ENCODE measurements at regions of chr2 and their contacts with region 1.

Region 1: DNA sequence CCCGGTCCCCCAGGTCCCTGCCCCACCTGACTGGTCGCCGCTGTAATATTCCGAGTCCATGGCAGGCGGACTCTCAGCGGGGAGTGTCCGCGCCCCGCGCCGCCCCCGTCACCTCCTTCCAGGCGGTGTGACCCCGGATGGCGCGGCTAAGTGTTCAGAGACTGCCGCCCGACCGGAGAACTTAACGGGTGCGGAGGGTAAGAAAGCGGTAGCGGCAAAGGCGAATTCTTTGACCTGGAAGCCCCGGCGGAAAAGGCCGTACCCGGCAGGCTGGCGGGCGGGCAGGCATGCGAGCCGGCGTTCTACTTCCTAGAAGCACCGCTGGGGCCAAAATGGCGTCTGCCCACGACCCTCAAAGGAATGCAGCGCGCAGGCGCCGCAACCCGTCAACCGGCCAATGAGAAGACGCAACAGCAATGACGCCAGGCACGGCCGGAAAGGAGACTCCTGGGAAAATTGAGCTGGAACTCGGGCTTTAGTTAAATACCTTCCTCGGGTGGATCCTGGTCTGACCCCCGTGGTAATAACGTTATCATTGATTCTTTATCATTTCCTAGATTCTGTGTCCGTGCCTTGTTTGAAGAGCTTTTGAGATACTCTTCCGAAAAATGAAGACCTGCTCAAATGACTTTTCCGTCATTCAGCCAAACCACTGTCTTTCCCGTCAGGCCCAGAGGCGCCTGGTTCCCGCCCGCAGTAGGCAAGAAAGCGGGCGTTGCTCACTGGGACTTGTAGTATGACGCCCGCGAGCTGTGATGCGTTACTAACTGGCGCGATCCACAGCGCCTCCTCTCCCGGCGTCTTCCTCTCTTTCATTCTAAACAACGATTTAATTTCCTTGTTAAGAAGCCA is at the start of gene IWS1:
- DNase-seq: peak; percentile 98
- H3K4me3 ChIP-seq: peak within 1 kb of the TSS; percentile 89 to 99 (median 94)
- H3K27ac ChIP-seq: peak within 1 kb of the TSS; percentile 93 to 98 (median 95)
- H3K4me1 ChIP-seq: peaks cover 0 to 26% (median 21%) of the 10 kb centered on the region in 4 donors
- H3K27me3 ChIP-seq: no peaks in the 10 kb centered on the region
- CTCF ChIP-seq: peak in 3 of 4 experiments; percentile 36 to 62 (median 52)
- EP300 ChIP-seq: peak in 2 of 4 donors; percentile 29 to 45
- POLR2A ChIP-seq: peak; percentile 68 to 82
- total RNA-seq, gene IWS1: 28.1 to 47.9 (median 30.7) TPM

Region 2: GRCh38 chr2:127014630-127015029 is 511.7 kb before region 1 on chr2:
- intact Hi-C with region 1: no loop called
- DNase-seq: no peak
- H3K4me3 ChIP-seq: no peak overlapping the region
- H3K27ac ChIP-seq: no peak overlapping the region
- H3K4me1 ChIP-seq: peaks cover 0 to 11% (median 5%) of the 10 kb centered on the region in 4 donors
- H3K27me3 ChIP-seq: no peaks in the 10 kb centered on the region
- CTCF ChIP-seq: no peak
- EP300 ChIP-seq: no peak
- POLR2A ChIP-seq: no peak

Region 3: GRCh38 chr2:127094509-127095366 is 431.6 kb before region 1 on chr2:
- intact Hi-C with region 1: no loop called
- DNase-seq: peak; percentile 79
- H3K4me3 ChIP-seq: no peak overlapping the region
- H3K27ac ChIP-seq: peak overlapping the region in 2 of 4 donors; percentile 14 to 33
- H3K4me1 ChIP-seq: peaks cover 0 to 45% (median 43%) of the 10 kb centered on the region in 4 donors
- H3K27me3 ChIP-seq: no peaks in the 10 kb centered on the region
- CTCF ChIP-seq: no peak
- EP300 ChIP-seq: no peak
- POLR2A ChIP-seq: no peak

Region 4: DNA sequence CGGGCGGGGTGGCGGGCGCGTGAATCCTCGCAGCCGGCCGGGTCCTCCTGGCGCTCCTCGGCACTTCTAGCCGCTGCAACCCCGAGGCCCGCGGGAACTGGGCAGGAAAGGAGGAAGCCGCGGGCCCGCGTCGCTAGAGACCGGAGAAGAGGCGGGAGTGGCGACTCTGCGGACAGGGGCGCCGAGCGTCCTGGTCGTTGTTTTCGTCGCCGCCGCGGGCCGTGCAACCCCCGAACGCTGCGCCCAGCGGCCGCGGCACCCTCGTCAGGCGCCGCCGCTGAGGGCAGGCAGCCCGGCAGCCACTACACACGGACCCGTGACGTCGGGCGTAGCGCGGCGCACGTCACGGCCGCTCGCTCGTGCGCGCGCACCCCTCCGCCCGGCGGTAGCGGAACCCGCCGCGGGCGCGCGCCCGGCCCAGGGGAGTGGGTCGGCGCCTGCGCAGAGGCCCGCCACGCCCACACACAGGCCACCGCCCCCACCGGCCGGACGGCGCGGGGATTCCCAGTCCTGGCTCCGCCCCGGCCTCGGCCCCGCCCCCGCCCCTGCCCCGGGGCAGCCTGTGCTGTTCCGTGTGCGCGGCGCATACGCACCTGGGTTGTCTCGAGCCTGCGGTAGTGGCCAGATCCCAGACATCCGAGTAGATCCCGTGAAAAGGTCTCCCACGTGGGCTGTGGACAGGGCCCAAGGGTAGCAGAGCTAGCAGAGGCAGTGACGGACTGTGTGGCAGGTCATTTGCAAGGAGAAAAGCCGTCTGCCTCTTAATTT is 138.5 kb before region 1 on chr2 and contains the start of gene MAP3K2:
- intact Hi-C with region 1: loop called (anchors 2 kb)
- DNase-seq: peak; percentile 97
- H3K4me3 ChIP-seq: peak within 1 kb of the TSS; percentile 81 to 98 (median 90)
- H3K27ac ChIP-seq: peak within 1 kb of the TSS; percentile 97 to 100 (median 99)
- H3K4me1 ChIP-seq: peaks cover 0 to 50% (median 30%) of the 10 kb centered on the region in 4 donors
- H3K27me3 ChIP-seq: no peaks in the 10 kb centered on the region
- CTCF ChIP-seq: no peak
- EP300 ChIP-seq: peak in 2 of 4 donors; percentile 55 to 95
- POLR2A ChIP-seq: peak; percentile 66 to 71
- total RNA-seq, gene MAP3K2: 39.9 to 52.2 (median 47.7) TPM

Region 5: DNA sequence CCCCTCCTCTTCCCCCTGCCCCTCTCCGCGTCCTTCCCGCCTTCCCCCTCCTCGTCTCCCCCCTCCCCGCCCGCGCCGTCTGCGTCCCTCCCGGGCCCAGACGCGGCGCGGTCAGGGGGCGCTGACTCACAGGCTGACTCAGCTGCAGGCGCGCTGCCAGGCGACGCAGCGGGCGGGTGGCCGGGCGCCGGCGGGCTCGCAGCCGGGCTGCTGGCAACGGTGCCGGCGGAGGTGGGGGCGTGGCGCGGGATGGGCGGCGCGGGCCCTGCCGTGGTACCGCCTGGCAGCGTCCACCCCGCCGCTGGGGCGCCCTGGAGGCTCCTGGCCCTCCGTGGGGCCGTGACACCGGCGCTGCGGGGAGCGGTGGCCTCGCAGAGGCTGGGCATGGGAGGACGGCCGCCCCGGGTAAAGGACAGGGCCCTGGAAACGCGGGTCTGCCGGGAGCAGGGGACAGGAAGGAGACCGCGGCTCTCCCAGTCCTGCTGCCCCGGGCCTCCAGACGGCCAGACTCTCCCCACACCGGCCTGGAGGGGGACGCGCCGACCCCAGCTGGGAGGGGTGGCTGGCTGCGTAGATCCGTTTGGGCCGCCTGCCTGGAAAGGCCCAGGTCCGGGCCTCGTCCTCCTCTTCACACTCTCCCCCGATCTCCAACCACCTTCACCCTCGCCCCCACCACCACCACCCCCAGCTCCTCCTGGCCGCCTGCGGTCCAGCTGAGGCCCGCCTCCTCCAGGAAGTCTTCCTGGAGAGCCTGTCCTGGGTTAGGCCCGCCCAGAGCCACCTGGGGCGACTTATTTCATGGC is 118.2 kb before region 1 on chr2:
- intact Hi-C with region 1: loop called (anchors 5 kb)
- DNase-seq: peak; percentile 96
- H3K4me3 ChIP-seq: peak overlapping the region; percentile 38 to 63 (median 57)
- H3K27ac ChIP-seq: peak overlapping the region; percentile 87 to 93 (median 90)
- H3K4me1 ChIP-seq: peaks cover 0 to 33% (median 25%) of the 10 kb centered on the region in 4 donors
- H3K27me3 ChIP-seq: no peaks in the 10 kb centered on the region
- CTCF ChIP-seq: no peak
- EP300 ChIP-seq: peak in 2 of 4 donors; percentile 21 to 71
- POLR2A ChIP-seq: no peak

Region 6: GRCh38 chr2:127701193-127701650 is 174.8 kb after region 1 on chr2 and contains the start of gene SFT2D3:
- intact Hi-C with region 1: loop called (anchors 2 kb)
- DNase-seq: peak; percentile 96
- H3K4me3 ChIP-seq: peak within 1 kb of the TSS; percentile 49 to 95 (median 78)
- H3K27ac ChIP-seq: peak within 1 kb of the TSS; percentile 92 to 100 (median 94)
- H3K4me1 ChIP-seq: peaks cover 0 to 39% (median 33%) of the 10 kb centered on the region in 4 donors
- H3K27me3 ChIP-seq: no peaks in the 10 kb centered on the region
- CTCF ChIP-seq: no peak
- EP300 ChIP-seq: no peak
- POLR2A ChIP-seq: peak; percentile 79 to 84
- total RNA-seq, gene SFT2D3: 5.6 to 8.6 (median 7.9) TPM

Region 7: DNA sequence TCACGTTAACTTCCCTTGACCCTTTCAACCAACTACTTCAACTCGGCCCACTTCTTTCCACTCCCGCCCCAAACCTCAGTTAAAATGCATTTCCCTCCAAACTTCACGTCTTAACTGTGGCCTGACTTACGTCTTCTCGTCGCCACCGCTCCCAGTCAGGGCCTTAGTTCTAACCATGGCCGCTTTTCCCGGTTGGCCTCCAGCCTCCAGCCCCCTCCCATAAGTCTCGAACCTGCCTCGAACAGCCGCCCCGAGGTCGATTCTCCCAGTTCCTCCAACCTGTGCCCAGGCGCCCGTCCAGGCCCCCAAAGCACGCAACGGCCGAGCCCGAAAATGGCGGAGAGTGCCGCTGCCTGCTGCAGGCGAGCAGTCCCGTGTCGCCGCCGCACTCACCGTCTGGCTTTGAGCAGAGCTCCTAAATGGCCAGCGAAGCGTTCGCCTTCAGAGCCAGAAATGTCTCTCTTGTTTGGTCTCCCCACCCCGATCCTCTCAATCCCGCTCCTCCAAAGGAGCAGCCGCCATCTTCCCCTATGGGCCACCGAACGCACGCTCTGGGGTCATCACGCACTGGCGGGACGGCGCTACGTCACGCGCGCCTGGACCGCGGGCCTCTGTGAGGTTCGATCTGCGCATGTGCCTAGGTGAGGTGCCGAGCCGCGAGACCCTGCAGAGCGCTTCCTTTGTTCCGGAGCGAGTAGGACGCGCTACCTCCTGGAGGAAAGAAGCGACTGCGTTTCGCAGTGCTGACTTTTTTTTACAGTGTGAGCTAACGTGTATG is 284.4 kb after region 1 on chr2 and contains the start of gene WDR33:
- intact Hi-C with region 1: loop called (anchors 5 kb)
- DNase-seq: peak; percentile 95
- H3K4me3 ChIP-seq: peak within 1 kb of the TSS; percentile 55 to 92 (median 71)
- H3K27ac ChIP-seq: peak within 1 kb of the TSS; percentile 82 to 94 (median 92)
- H3K4me1 ChIP-seq: peaks cover 0 to 41% (median 37%) of the 10 kb centered on the region in 4 donors
- H3K27me3 ChIP-seq: no peaks in the 10 kb centered on the region
- CTCF ChIP-seq: peak in 1 of 4 experiments; percentile 11
- EP300 ChIP-seq: no peak
- POLR2A ChIP-seq: peak; percentile 55 to 61
- total RNA-seq, gene WDR33: 37.8 to 45.2 (median 44.3) TPM

Measured in sigmoid colon (tissue), 7 donors.